ENCODE measurements at regions of chr6 and their contacts with region 1.

Region 1: GRCh38 chr6:131182991-131183425 is 47.7 kb downstream of the AKAP7 start:
- DNase-seq: no peak
- H3K4me3 ChIP-seq: no peak overlapping the region
- H3K27ac ChIP-seq: no peak overlapping the region
- H3K27me3 ChIP-seq: no peaks in the 10 kb centered on the region
- CTCF ChIP-seq: peak; percentile 71

Region 2: DNA sequence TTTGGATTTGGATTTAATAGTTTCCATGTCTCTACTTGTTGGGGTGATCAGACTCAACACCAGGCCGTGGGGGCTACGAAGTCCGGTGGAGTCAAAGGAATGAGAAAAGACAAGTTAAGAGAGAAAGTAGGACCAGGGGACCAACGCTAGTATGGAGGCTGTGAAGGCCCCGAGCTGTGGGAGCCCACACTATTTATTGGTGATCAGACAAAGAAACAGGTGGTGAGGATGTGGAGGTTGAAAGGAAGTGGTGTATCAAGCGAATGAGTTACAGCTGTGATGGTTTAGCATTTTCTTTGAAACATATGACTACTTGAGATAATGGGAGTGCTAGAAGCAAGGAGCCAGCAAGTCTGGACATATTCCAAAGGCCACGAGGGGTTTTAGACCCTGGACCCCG is 14.7 kb after region 1 on chr6:
- CTCF ChIA-PET with region 1: interaction called, 14 read pairs
- POLR2A ChIA-PET with region 1: no interaction called
- DNase-seq: no peak
- H3K4me3 ChIP-seq: no peak overlapping the region
- H3K27ac ChIP-seq: no peak overlapping the region
- H3K27me3 ChIP-seq: no peaks in the 10 kb centered on the region
- CTCF ChIP-seq: no peak

Measured in AG04450 (cell line).